Activated B cell treated with CpG ODN at 0.5 μM for 24 hours (primary cell): ENCODE measurements at regions of chr7 and their contacts with region 1.

Region 1: GRCh38 chr7:98802088-98802780 is 67.6 kb downstream of the TMEM130 start:
- DNase-seq: peak; percentile 38
- ATAC-seq: peak; percentile 86
- H3K4me3 Mint-ChIP-seq: peak overlapping the region; percentile 41
- H3K27ac Mint-ChIP-seq: no peak overlapping the region
- H3K4me1 Mint-ChIP-seq: peaks cover 18% of the 10 kb centered on the region
- H3K27me3 Mint-ChIP-seq: peaks cover 19% of the 10 kb centered on the region
- CTCF ChIP-seq: no peak

Region 2: DNA sequence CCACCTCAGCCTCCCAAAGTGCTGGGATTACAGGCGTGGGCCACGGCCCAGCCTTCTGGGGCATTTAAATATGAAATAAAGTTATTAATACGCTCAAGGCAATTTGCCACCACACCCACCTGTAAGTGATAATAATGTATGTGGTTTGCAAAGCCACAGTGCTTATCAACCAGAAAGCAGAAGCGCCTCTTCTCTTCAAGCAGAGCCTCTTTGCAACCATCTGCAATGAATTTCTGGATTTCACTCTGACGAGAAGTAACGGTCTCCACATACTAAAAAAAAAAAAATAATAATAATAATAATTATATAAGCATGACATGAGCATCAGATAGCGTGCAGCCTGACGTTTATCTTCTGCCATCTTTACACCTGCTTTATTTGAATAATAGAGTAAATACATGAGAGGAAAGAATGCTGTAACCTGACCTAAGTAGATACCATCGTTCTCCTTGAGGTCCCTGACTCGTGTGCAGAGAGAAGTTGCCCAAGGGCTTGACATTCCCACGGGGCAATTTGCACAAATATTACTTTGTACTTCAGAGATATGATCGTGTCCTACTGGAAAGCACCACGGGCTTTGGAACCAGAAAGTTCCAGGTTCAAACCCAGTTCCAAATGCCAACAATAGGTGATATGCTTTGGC is 486.8 kb before region 1 on chr7:
- CTCF ChIA-PET with region 1: no interaction called
- POLR2A ChIA-PET with region 1: no interaction called
- intact Hi-C with region 1: no loop called
- DNase-seq: no peak
- ATAC-seq: peak; percentile 61
- H3K4me3 Mint-ChIP-seq: peak overlapping the region; percentile 15
- H3K27ac Mint-ChIP-seq: peak overlapping the region; percentile 76
- H3K4me1 Mint-ChIP-seq: peaks cover 41% of the 10 kb centered on the region
- H3K27me3 Mint-ChIP-seq: peaks cover 28% of the 10 kb centered on the region
- CTCF ChIP-seq: no peak

Region 3: DNA sequence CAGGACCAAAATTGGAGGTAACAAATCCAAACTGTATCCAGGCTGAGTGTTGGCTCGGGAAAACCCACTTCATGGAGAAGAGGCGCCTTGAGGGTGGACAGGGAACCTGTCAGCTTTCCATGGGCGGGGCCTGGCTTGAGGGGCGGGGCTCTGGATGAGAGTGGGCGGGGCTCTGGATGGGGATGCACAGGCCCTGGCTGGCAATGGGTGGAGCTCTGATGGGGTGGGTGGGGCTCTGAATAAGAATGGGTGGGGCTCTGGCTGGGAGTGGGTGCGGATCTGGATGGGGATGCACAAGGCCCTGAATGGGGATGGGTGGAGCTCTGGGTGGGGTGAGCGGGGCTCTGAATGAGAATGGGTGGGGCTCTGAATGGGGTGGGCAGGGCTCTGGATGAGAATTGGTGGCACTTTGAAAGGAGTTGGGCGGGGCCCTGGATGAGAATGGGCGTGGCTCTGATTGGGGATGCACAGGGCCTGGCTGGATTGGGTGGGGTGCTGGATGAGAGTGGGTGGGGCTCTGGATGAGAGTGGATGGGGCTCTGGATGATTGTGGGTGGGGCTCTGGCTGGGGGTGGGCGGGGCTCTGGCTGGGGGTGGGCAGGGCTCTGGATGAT is 281.8 kb before region 1 on chr7:
- CTCF ChIA-PET with region 1: no interaction called
- POLR2A ChIA-PET with region 1: no interaction called
- intact Hi-C with region 1: no loop called
- DNase-seq: no peak
- ATAC-seq: no peak
- H3K4me3 Mint-ChIP-seq: no peak overlapping the region
- H3K27ac Mint-ChIP-seq: no peak overlapping the region
- H3K4me1 Mint-ChIP-seq: no peaks in the 10 kb centered on the region
- H3K27me3 Mint-ChIP-seq: peaks cover 3% of the 10 kb centered on the region
- CTCF ChIP-seq: no peak

Region 4: DNA sequence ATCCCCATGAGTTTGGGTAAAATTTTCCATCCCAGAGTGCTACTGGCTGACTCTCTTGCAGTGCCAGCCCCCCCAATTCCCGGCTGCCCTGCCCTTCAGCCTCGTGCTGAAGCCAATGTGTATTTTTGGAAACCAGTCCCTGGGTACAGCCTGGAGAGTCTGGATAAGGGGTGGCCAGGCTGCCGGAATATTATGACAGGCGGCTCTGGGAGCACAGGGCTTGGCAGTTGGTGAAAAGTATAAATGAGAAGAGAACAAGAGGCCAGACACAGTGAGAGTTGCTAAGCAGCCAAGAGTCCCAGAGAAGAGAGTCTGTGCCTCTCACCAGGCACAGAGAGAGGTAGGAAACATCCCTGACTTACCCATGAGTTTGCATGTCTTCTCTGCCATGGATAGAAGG is 14.0 kb after region 1 on chr7:
- CTCF ChIA-PET with region 1: no interaction called
- POLR2A ChIA-PET with region 1: no interaction called
- intact Hi-C with region 1: no loop called
- DNase-seq: no peak
- ATAC-seq: no peak
- H3K4me3 Mint-ChIP-seq: no peak overlapping the region
- H3K27ac Mint-ChIP-seq: no peak overlapping the region
- H3K4me1 Mint-ChIP-seq: no peaks in the 10 kb centered on the region
- H3K27me3 Mint-ChIP-seq: peaks cover 13% of the 10 kb centered on the region
- CTCF ChIP-seq: no peak

Region 5: GRCh38 chr7:98826387-98827231 is 24.4 kb after region 1 on chr7:
- CTCF ChIA-PET with region 1: no interaction called
- POLR2A ChIA-PET with region 1: no interaction called
- intact Hi-C with region 1: no loop called
- DNase-seq: no peak
- ATAC-seq: no peak
- H3K4me3 Mint-ChIP-seq: no peak overlapping the region
- H3K27ac Mint-ChIP-seq: no peak overlapping the region
- H3K4me1 Mint-ChIP-seq: no peaks in the 10 kb centered on the region
- H3K27me3 Mint-ChIP-seq: peaks cover 3% of the 10 kb centered on the region
- CTCF ChIP-seq: no peak

Region 6: DNA sequence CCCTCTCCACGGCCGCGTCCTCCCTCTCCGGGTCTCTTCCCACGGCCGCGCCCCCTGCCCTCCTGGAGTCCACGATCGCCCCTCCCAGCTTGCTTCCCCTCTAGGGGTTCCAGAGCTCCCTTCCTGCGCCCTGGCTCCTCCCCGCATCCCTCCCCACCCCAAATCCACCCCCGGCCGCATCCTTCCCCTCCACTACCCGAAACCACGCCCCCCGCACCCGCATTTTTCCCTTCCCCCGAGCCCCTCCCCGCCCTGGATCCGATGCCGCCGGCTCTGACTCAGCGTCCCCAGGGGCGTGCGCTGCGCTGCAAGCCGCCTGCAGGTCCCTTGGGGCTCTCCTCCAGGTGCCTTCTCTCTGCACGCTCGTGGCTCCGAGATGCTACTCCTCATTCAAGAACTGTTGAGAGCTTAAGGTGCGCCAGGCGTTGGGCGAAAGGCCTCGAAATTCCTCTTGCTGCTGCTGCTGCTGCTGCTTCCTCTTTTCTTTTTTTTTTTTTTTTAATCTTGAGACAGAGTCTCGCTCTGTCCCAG is 68.0 kb after region 1 on chr7:
- CTCF ChIA-PET with region 1: no interaction called
- POLR2A ChIA-PET with region 1: interaction called, 4 read pairs
- intact Hi-C with region 1: loop called (anchors 1 kb)
- DNase-seq: peak; percentile 85
- ATAC-seq: peak; percentile 98
- H3K4me3 Mint-ChIP-seq: peak overlapping the region; percentile 85
- H3K27ac Mint-ChIP-seq: peak overlapping the region; percentile 63
- H3K4me1 Mint-ChIP-seq: peaks cover 20% of the 10 kb centered on the region
- H3K27me3 Mint-ChIP-seq: peaks cover 5% of the 10 kb centered on the region
- CTCF ChIP-seq: no peak